AG04450 (cell line): ENCODE measurements at regions of chr3 and their contacts with region 1.

Region 1: GRCh38 chr3:183188895-183189462 is 26.4 kb upstream of the LAMP3 start:
- DNase-seq: no peak
- H3K4me3 ChIP-seq: no peak overlapping the region
- H3K27ac ChIP-seq: no peak overlapping the region
- H3K27me3 ChIP-seq: no peaks in the 10 kb centered on the region
- CTCF ChIP-seq: peak; percentile 42

Region 2: GRCh38 chr3:182544542-182544941 is 644.4 kb before region 1 on chr3:
- CTCF ChIA-PET with region 1: no interaction called
- POLR2A ChIA-PET with region 1: no interaction called
- DNase-seq: no peak
- H3K4me3 ChIP-seq: no peak overlapping the region
- H3K27ac ChIP-seq: no peak overlapping the region
- H3K27me3 ChIP-seq: no peaks in the 10 kb centered on the region
- CTCF ChIP-seq: no peak

Region 3: DNA sequence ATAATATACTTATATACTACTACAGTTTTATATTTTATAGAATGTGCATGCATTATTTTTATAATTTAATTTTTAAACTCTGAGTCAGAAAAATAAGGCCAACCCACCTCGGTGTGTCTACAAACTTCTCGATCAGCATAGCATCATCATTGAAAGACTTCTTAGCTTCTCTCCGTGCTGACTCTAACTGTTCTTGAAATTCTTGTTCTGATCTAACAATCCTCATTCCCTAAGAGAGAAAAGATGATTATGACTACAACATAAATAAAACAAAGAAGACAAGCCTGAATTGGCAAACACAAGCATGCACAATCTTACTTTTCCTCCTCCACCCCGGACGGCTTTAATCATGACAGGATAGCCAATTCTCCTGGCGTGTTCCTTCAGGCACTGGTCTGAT is 118.1 kb before region 1 on chr3:
- CTCF ChIA-PET with region 1: no interaction called
- POLR2A ChIA-PET with region 1: no interaction called
- DNase-seq: no peak
- H3K4me3 ChIP-seq: no peak overlapping the region
- H3K27ac ChIP-seq: no peak overlapping the region
- H3K27me3 ChIP-seq: no peaks in the 10 kb centered on the region
- CTCF ChIP-seq: no peak

Region 4: DNA sequence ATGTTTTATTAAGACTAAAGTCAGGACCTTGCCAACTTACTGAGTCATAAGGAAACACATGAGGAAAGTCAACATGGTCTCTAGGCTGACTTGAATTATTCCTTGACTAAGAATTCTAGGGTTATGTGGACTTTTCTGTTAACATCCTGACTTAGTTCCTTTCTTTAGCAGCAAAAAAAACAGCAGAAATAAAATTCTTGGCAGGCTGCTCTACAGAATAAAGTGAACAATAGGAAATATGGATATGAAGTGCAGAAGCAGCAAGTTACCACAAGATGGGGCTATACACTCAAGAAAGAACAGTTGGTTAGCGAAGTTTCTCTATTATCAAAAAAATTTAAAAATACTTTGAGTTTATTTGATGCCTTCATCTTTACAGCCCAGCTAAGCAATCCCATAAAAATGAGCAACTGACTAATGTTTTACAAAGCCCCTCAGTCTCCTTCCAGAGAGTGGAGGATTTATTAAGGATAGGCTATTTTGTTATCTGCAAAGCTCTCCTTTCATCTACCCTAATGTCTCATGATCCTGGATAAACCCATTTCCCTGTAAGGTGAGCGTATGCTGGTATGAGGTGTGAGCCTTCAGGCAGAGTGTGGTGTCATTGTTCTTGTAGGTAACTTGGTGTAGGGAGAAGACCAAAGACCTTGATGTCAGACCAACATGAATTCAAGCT is 66.6 kb before region 1 on chr3:
- CTCF ChIA-PET with region 1: interaction called, 39 read pairs
- POLR2A ChIA-PET with region 1: no interaction called
- DNase-seq: no peak
- H3K4me3 ChIP-seq: no peak overlapping the region
- H3K27ac ChIP-seq: no peak overlapping the region
- H3K27me3 ChIP-seq: peaks cover 9% of the 10 kb centered on the region
- CTCF ChIP-seq: peak; percentile 82

Region 5: GRCh38 chr3:183215576-183216202 is 26.7 kb after region 1 on chr3:
- CTCF ChIA-PET with region 1: interaction called, 17 read pairs
- POLR2A ChIA-PET with region 1: no interaction called
- DNase-seq: no peak
- H3K4me3 ChIP-seq: no peak overlapping the region
- H3K27ac ChIP-seq: no peak overlapping the region
- H3K27me3 ChIP-seq: peaks cover 9% of the 10 kb centered on the region
- CTCF ChIP-seq: no peak

Region 6: GRCh38 chr3:183375787-183376186 is 186.8 kb after region 1 on chr3:
- CTCF ChIA-PET with region 1: interaction called, 432 read pairs
- POLR2A ChIA-PET with region 1: no interaction called
- DNase-seq: no peak
- H3K4me3 ChIP-seq: no peak overlapping the region
- H3K27ac ChIP-seq: no peak overlapping the region
- H3K27me3 ChIP-seq: no peaks in the 10 kb centered on the region
- CTCF ChIP-seq: no peak

Region 7: DNA sequence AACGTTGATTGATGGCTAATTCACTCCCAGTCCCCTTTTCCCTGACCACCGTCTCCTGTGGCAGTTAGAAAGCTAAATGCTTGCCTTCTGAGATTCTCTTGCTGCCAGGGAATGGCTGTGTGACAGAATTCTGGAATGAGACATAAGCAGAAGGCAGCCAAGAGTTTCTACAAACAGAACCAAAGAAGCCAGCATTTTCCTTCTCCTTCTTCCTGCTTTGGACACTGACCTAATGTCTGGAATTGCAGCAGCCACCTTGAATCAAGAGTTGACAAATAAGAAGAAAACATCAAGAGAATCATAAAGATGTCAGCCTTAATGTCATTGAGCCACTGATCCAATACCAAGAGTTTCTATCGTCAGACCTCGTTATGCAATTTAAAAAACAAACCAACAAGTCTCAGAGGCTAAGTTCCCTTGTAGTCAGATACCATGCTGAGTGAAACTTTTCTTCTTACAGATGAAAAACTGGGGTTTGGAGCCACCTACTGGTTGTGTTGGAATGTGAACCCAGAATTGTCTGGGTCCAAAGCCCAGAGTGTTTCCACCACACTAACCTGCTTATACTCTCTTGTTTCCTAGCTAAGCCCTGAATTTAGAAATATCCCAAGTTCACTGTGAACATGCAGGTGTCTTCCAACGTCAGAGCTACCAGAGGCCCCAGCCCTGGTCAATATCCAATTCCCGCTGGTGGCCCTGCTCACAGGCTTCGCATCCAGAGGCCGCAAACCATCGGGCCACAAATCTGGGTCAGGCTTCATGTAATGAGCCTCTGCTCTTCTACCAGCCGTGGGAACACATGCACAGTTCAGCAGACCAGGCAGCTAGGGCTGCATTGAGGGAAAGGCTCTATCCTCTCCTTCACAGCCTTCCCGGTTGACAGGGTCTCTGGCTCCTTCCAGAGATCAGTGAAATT is 197.0 kb after region 1 on chr3:
- CTCF ChIA-PET with region 1: interaction called, 432 read pairs
- POLR2A ChIA-PET with region 1: interaction called, 4 read pairs
- DNase-seq: peak; percentile 49
- H3K4me3 ChIP-seq: no peak overlapping the region
- H3K27ac ChIP-seq: no peak overlapping the region
- H3K27me3 ChIP-seq: peaks cover 22% of the 10 kb centered on the region
- CTCF ChIP-seq: peak; percentile 75

Region 8: DNA sequence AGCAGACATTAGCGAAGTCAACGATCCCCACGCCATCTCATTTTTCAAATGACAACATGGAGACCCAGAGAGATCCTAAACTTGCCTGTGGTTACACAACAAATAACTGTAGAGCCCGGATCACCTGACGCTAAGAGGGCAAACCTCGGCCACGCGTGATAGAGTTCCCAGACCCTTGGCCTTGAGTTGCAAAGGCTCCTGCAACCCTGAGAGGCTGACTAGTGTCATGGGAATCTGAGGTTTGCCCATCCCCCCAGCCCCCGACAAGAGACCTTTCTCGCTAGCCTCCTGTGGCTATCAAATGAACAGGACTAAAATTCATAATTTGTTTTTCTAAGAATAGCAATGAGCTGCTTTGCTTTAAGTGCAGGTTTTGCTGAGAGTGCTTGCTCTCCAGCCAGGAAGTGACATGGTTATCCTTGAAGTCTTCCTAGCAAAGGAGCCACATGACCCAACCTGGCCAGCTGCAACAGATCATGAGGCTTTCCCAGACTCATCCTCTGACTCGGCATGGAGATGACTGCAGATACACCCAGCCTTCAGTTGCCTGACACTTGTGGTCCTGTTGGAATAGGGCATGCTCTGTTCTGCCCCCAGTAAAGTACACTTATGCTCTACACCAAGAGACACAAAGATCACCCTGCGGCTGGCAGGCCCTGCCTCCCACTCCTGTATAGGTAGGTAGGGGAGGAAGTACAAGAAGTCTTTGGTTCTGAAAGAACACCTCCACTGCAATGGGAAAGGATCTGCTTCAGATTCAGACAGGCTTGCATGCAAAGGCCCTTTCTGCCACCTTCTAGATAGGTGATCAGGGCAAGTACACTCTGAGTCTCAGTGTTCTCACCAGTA is 203.4 kb after region 1 on chr3:
- CTCF ChIA-PET with region 1: interaction called, 29 read pairs
- POLR2A ChIA-PET with region 1: no interaction called
- DNase-seq: no peak
- H3K4me3 ChIP-seq: no peak overlapping the region
- H3K27ac ChIP-seq: no peak overlapping the region
- H3K27me3 ChIP-seq: peaks cover 37% of the 10 kb centered on the region
- CTCF ChIP-seq: no peak

Region 9: GRCh38 chr3:183400352-183400751 is 211.4 kb after region 1 on chr3:
- CTCF ChIA-PET with region 1: interaction called, 13 read pairs
- POLR2A ChIA-PET with region 1: no interaction called
- DNase-seq: no peak
- H3K4me3 ChIP-seq: no peak overlapping the region
- H3K27ac ChIP-seq: no peak overlapping the region
- H3K27me3 ChIP-seq: peaks cover 9% of the 10 kb centered on the region
- CTCF ChIP-seq: no peak